ENCODE measurements at regions of chr3 and their contacts with region 1.

Region 1: GRCh38 chr3:177724020-177724638 is 526.8 kb upstream of the TBL1XR1 start:
- DNase-seq: no peak
- H3K4me3 ChIP-seq: no peak overlapping the region
- H3K27ac ChIP-seq: peak overlapping the region; percentile 13
- H3K4me1 ChIP-seq: peaks cover 30% of the 10 kb centered on the region
- H3K27me3 ChIP-seq: no peaks in the 10 kb centered on the region
- CTCF ChIP-seq: no peak
- POLR2A ChIP-seq: no peak

Region 2: GRCh38 chr3:177468331-177468730 is 255.8 kb before region 1 on chr3:
- intact Hi-C with region 1: loop called (anchors 10 kb)
- DNase-seq: no peak
- H3K4me3 ChIP-seq: no peak overlapping the region
- H3K27ac ChIP-seq: no peak overlapping the region
- H3K4me1 ChIP-seq: peaks cover 44% of the 10 kb centered on the region
- H3K27me3 ChIP-seq: no peaks in the 10 kb centered on the region
- CTCF ChIP-seq: no peak
- POLR2A ChIP-seq: no peak

Region 3: GRCh38 chr3:177563243-177563780 is 160.8 kb before region 1 on chr3:
- intact Hi-C with region 1: no loop called
- DNase-seq: no peak
- H3K4me3 ChIP-seq: no peak overlapping the region
- H3K27ac ChIP-seq: no peak overlapping the region
- H3K4me1 ChIP-seq: no peaks in the 10 kb centered on the region
- H3K27me3 ChIP-seq: no peaks in the 10 kb centered on the region
- CTCF ChIP-seq: no peak
- POLR2A ChIP-seq: no peak

Measured in vagina (tissue), 2 donors.